A549 (cell line): ENCODE measurements at regions of chr1 and their contacts with region 1.

Region 1: GRCh38 chr1:202235856-202236837 is 42.5 kb downstream of the LGR6 start:
- DNase-seq: peak; percentile 92 to 98
- ATAC-seq: peak; percentile 89 to 92
- H3K4me3 ChIP-seq: peak overlapping the region; percentile 26
- H3K27ac ChIP-seq: peak overlapping the region; percentile 77 to 88
- H3K4me1 ChIP-seq: peaks cover 29% of the 10 kb centered on the region
- CTCF ChIP-seq: peak; percentile 68
- EP300 ChIP-seq: no peak
- POLR2A ChIP-seq: no peak
- RAD21 ChIP-seq: peak; percentile 21 to 47; a peak in 3 of 5 replicates

Region 2: GRCh38 chr1:202200112-202200566 is 36.0 kb before region 1 on chr1:
- CTCF ChIA-PET with region 1: interaction called, 17 read pairs
- POLR2A ChIA-PET with region 1: no interaction called
- DNase-seq: peak; percentile 53 to 66
- ATAC-seq: peak; percentile 26 to 66; a peak in 4 of 6 replicates
- H3K4me3 ChIP-seq: no peak overlapping the region
- H3K27ac ChIP-seq: peak overlapping the region; percentile 74 to 80
- H3K4me1 ChIP-seq: peaks cover 26% of the 10 kb centered on the region
- CTCF ChIP-seq: no peak
- EP300 ChIP-seq: no peak
- POLR2A ChIP-seq: no peak
- RAD21 ChIP-seq: no peak

Region 3: GRCh38 chr1:202210385-202210784 is 25.8 kb before region 1 on chr1:
- CTCF ChIA-PET with region 1: interaction called, 23 read pairs
- POLR2A ChIA-PET with region 1: no interaction called
- DNase-seq: peak in 1 of 2 experiments; percentile 52
- ATAC-seq: peak; percentile 73 to 75
- H3K4me3 ChIP-seq: no peak overlapping the region
- H3K27ac ChIP-seq: no peak overlapping the region
- H3K4me1 ChIP-seq: peaks cover 11% of the 10 kb centered on the region
- CTCF ChIP-seq: 0 out of 3 replicates have a peak, but pooled peaks have one; percentile 7
- EP300 ChIP-seq: no peak
- POLR2A ChIP-seq: no peak
- RAD21 ChIP-seq: peak in 1 of 2 experiments; percentile 29; a peak in 3 of 5 replicates

Region 4: DNA sequence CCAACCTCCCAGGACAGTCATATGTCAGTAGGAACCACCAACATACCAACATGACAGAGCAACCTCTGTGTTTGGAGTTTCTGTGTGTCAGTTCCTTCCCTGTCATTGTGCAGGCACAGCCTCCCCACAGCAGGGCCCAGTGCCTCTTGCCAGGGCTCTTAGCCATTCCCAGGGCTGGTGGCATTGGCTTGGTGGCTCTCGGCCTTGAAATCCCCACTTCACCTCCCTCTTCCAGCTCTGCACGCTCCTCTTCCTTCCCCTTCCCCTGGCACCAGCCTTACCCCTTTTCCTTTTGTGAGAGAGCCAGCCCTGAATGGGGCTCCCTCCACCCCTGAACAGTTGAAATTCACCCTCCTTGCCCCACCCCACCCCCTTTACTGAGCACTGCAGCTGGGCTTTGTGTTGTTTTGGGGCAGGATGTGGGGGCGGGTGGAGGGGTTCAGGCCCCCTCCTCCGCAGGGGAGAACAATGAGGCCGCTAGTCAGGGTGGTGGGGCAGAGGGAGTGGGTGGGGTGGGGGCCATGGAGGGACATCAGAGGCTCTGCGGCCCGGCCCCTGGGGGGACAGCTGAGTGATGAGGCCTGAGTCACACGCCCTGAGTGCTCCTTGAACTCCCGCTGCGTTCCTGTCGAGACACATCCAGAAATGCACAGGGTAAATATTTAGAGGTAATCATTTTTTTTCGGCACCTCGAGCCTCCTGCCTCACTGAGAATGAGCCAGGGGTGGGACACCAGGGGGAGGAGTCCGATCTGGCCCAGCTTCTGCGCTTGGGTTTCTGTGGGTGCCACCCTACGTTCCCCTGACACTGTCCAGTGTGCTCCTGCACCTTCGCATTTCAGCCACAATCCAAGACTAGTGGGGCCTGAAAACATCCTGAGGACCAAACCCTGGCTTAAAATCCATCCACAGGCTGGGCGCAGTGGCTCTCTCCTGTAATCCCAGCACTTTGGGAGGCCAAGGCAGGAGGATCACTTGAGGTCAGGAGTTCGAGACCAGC is 13.9 kb before region 1 on chr1:
- CTCF ChIA-PET with region 1: interaction called, 73 read pairs
- POLR2A ChIA-PET with region 1: no interaction called
- DNase-seq: no peak
- ATAC-seq: peak; percentile 67 to 72
- H3K4me3 ChIP-seq: no peak overlapping the region
- H3K27ac ChIP-seq: peak overlapping the region; percentile 46 to 84
- H3K4me1 ChIP-seq: peaks cover 43% of the 10 kb centered on the region
- CTCF ChIP-seq: no peak
- EP300 ChIP-seq: peak; percentile 45 to 73; a peak in 2 of 5 replicates
- POLR2A ChIP-seq: no peak
- RAD21 ChIP-seq: no peak; a peak in 1 of 5 replicates

Region 5: GRCh38 chr1:202247894-202248681 is 11.9 kb after region 1 on chr1:
- CTCF ChIA-PET with region 1: interaction called, 34 read pairs
- POLR2A ChIA-PET with region 1: interaction called, 3 read pairs
- DNase-seq: no peak
- ATAC-seq: no peak
- H3K4me3 ChIP-seq: no peak overlapping the region
- H3K27ac ChIP-seq: no peak overlapping the region
- H3K4me1 ChIP-seq: no peaks in the 10 kb centered on the region
- CTCF ChIP-seq: no peak
- EP300 ChIP-seq: no peak
- POLR2A ChIP-seq: no peak
- RAD21 ChIP-seq: no peak

Region 6: GRCh38 chr1:202255343-202255742 is 19.2 kb after region 1 on chr1:
- CTCF ChIA-PET with region 1: interaction called, 34 read pairs
- POLR2A ChIA-PET with region 1: no interaction called
- DNase-seq: no peak
- ATAC-seq: no peak
- H3K4me3 ChIP-seq: no peak overlapping the region
- H3K27ac ChIP-seq: no peak overlapping the region
- H3K4me1 ChIP-seq: 0 out of 3 replicates have a peak, but pooled peaks cover 5% of the 10 kb centered on the region
- CTCF ChIP-seq: no peak
- EP300 ChIP-seq: no peak
- POLR2A ChIP-seq: no peak
- RAD21 ChIP-seq: no peak

Region 7: GRCh38 chr1:202671122-202671797 is 435.1 kb after region 1 on chr1:
- CTCF ChIA-PET with region 1: no interaction called
- POLR2A ChIA-PET with region 1: no interaction called
- DNase-seq: no peak
- ATAC-seq: no peak
- H3K4me3 ChIP-seq: no peak overlapping the region
- H3K27ac ChIP-seq: no peak overlapping the region
- H3K4me1 ChIP-seq: no peaks in the 10 kb centered on the region
- CTCF ChIP-seq: no peak
- EP300 ChIP-seq: no peak
- POLR2A ChIP-seq: no peak
- RAD21 ChIP-seq: no peak

Region 8: DNA sequence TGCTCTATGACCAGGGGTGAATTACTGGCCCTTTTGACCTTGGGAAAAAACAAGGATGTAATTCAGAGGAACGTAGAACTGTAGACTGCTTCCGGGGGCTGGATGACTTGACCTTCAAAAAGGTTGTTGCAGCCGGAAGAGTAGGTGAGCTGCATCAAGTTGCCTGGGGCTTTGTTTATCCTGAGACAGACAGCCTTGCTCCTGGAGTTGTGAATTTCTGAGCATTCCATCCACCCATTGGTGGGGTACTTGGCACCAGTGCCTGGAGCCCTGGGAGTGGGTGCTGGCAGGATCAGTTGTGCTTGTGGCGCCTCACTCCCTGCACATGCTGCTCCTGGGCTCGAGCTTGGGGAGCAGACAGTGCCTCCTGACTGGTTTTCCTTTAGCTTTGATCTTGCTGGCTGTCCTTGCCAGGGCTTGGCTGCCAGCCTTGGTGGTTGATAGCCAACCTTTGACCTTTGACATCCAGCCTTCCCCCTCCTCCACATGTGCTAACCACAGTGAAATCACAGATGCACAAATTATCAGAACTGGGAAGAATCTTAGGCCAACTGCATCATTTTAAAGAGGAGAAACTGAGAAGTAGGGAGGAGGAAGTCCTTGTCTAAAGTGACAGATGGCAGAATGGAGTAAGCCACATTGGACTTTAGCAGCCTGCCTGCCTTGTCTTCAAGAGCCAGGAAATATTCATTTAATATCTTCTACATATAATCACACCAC is 865.9 kb after region 1 on chr1:
- CTCF ChIA-PET with region 1: no interaction called
- POLR2A ChIA-PET with region 1: no interaction called
- DNase-seq: no peak
- ATAC-seq: no peak
- H3K4me3 ChIP-seq: no peak overlapping the region
- H3K27ac ChIP-seq: no peak overlapping the region
- H3K4me1 ChIP-seq: no peaks in the 10 kb centered on the region
- CTCF ChIP-seq: no peak
- EP300 ChIP-seq: no peak
- POLR2A ChIP-seq: no peak
- RAD21 ChIP-seq: no peak